Dendritic cell treated with granulocyte-macrophage colony-stimulating factor and Interleukin-4, amounts not matched to agents 40 ng/mL and 50 ng/mL, for 4 days (primary cell): ENCODE measurements at regions of chr14 and their contacts with region 1.

Region 1: GRCh38 chr14:94355191-94355797 is 32.2 kb upstream of the SERPINA6 start:
- H3K4me3 Mint-ChIP-seq: no peak overlapping the region
- H3K27ac Mint-ChIP-seq: no peak overlapping the region
- H3K4me1 Mint-ChIP-seq: peaks cover 15% of the 10 kb centered on the region
- H3K27me3 Mint-ChIP-seq: peaks cover 22% of the 10 kb centered on the region

Region 2: DNA sequence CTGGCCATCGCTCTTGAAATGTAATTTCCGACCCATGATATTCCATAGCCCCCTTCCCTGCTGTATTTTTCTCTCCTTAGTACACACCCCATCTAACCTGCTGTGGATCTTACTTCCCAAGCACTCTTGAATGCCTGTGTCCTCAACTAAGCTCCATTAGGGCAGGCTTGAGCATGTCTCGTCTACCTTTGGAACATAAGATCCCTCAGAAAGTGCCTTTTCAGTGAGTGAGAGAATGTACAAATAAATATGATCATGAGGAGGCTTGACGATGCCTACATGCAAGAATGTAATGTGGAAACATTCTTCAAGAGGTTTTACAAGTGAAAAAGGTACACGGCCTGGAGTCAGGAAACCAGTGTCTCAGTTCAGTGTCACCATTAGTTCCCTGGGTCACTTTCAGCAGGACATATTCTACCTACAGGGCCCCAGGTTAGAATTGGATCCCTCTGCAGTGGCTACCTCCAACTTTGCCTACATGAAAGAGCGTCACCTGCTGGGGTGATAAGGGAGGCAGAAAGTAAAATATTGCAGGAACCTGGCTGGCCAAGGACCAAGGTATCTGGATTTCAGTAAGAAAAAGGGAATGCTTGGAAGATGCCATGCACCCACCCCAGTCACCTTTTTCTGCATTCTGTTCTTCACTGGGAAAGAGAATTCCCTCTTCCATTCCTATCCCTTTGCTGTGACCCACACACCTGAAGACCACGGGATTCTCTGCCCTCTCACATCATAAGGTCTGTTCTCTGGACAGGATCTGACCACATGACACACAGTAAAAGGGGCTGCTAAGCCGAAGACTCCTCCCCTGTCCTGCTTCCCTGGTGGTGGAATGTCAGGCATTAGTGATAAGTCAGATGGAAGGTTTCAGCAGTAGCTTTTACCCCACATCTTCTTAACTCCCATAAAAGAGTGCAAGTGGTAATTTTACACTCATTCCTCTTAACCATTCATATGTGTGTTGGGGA is 57.7 kb after region 1 on chr14:
- intact Hi-C with region 1: loop called (anchors 2 kb)
- H3K4me3 Mint-ChIP-seq: no peak overlapping the region
- H3K27ac Mint-ChIP-seq: no peak overlapping the region
- H3K4me1 Mint-ChIP-seq: peaks cover 16% of the 10 kb centered on the region
- H3K27me3 Mint-ChIP-seq: peaks cover 3% of the 10 kb centered on the region

Region 3: DNA sequence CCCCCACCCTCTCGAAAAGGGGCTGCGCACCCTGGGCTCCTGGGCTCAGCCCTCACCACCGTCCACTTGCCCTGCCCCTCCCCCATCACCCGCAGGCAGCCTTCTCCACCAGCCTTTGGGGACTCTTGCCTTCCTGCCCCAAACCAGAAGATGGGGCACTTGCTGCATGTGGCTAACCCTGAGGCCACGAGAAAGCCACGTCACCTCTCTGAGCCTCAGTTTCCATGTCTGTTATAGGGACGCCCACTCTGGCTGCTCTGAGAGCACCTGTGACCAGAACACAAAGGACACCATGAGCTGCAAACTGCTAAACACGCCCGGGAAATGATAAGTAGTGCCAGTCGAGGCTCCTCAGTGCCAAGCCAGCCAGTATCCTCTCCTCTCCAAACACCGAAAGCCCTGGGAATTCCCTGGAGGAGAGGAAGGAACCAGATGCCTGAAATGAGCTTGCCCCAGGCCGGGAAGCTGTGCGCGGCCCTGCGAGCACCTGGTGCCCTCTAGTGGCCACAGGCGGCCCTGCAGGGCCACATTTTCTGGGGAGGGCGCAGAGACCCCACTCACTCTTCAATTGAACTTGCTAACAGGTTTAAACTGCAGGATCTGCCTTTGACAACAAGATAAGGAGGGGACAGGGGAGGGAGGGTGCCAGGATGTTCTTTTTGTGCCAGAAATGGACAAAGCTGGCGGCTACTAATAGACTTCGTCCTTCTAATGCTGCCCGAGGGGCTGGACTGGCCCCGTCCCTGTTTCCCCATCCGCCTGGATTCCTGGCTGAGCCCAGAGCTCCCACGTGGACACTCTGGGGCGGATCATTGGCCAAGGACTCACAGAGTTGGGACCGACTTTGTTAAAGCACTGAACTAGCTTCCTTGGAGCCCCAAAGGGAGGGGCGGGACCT is 130.9 kb after region 1 on chr14:
- intact Hi-C with region 1: loop called (anchors 1 kb)
- H3K4me3 Mint-ChIP-seq: no peak overlapping the region
- H3K27ac Mint-ChIP-seq: no peak overlapping the region
- H3K4me1 Mint-ChIP-seq: no peaks in the 10 kb centered on the region
- H3K27me3 Mint-ChIP-seq: peaks cover 20% of the 10 kb centered on the region